ENCODE measurements at regions of chr17 and their contacts with region 1.

Region 1: DNA sequence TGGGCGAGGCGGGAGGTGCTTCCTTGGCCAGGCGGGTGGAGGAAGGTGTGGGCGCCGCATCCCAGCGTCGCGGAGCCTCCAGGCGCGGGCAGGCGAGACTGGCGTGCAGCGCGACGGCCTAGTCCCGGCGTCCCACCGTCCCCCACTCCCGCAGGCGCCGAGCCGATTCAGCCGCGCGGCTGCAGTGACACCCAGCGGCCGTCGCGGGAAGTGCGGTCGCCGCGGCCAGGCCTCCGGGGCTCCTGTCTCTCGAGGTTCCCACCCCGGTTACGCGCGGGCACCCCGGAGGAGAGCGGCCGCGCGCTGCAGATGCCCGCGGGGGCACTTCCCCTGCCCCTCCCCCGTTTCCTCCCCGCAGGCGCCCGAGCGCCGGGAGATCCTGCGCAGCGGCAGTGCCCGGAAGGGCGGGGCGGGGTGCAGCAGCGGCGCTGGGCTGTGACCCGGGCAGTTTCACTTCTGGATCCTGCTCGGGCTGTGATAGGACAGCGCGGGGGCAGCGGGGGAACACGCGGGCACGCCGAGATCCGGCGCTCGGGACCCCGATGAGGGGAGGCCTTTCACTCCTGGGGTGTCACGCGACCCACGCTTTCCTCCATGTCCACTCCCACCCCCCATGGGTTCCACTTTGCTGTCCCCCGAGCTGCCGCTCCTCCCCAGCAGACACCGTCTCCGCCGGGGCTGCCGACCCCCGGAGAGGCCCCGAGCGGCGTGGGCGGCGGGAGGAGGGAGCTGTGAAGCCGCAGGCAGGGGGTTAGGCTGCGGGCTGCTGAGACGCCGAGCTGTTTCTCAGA is 16.6 kb downstream of the GRB7 start:
- DNase-seq: peak; percentile 98
- ATAC-seq: peak; percentile 86
- H3K4me3 Mint-ChIP-seq: peak overlapping the region; percentile 77
- H3K27ac Mint-ChIP-seq: peak overlapping the region; percentile 76
- H3K4me1 Mint-ChIP-seq: peaks cover 61% of the 10 kb centered on the region
- H3K27me3 Mint-ChIP-seq: no peaks in the 10 kb centered on the region

Region 2: GRCh38 chr17:39450847-39451581 is 303.3 kb before region 1 on chr17 and contains the start of gene MED1:
- CTCF ChIA-PET with region 1: no interaction called
- POLR2A ChIA-PET with region 1: no interaction called
- intact Hi-C with region 1: loop called in 1 of 2 experiments (anchors 5 kb)
- DNase-seq: peak; percentile 96
- ATAC-seq: peak; percentile 99
- H3K4me3 Mint-ChIP-seq: peak within 1 kb of the TSS; percentile 96
- H3K27ac Mint-ChIP-seq: peak within 1 kb of the TSS; percentile 96
- H3K4me1 Mint-ChIP-seq: peaks cover 30% of the 10 kb centered on the region
- H3K27me3 Mint-ChIP-seq: no peaks in the 10 kb centered on the region
- total RNA-seq, gene MED1: 66.1 to 76.1 TPM

Region 3: DNA sequence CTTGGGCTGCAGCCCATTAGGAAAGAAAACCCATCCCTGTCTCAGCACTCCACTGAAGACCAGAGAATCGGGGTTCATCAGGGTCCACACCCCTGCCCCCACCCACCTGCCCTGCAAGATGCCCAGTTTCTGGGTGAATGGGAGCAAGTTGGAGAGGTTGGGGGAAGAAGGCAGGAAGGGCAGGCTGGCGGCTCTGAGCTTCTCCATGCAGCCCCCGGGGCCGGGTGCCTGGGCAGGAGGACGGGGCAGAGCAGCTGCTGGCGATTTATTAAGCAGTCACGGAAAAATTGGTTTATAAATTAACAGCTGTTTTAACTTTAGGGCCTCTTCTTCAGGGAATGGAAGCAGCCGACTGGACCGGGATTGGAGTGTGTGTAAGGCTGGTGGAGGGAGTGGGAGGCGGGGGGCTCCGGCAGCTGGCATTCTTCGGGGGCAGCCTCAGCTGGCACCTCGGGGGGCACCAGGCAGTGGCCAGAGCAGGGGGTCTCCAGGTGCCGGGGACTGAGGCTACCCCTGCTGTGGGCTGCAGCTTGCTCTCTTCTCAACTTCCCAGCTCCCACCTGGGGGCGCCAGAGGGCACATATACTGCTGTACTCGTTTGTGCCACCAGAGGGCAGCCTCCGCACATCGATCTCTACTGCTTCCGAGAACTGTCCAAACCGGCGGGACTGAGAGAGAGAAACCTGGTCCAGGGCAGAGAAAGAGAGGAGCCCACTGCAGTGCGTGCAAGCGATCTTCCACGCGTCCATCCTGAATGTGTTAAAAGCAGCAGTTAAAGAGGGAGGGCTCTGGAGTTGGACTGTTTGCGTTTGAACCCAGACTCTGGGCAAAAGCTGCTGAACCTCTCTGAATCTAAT is 132.6 kb before region 1 on chr17:
- CTCF ChIA-PET with region 1: interaction called, 18 read pairs
- POLR2A ChIA-PET with region 1: interaction called, 3 read pairs
- intact Hi-C with region 1: loop called (anchors 1 kb)
- DNase-seq: peak; percentile 91
- ATAC-seq: peak; percentile 68
- H3K4me3 Mint-ChIP-seq: peak overlapping the region; percentile 62
- H3K27ac Mint-ChIP-seq: peak overlapping the region; percentile 91
- H3K4me1 Mint-ChIP-seq: peaks cover 26% of the 10 kb centered on the region
- H3K27me3 Mint-ChIP-seq: peaks cover 18% of the 10 kb centered on the region

Region 4: DNA sequence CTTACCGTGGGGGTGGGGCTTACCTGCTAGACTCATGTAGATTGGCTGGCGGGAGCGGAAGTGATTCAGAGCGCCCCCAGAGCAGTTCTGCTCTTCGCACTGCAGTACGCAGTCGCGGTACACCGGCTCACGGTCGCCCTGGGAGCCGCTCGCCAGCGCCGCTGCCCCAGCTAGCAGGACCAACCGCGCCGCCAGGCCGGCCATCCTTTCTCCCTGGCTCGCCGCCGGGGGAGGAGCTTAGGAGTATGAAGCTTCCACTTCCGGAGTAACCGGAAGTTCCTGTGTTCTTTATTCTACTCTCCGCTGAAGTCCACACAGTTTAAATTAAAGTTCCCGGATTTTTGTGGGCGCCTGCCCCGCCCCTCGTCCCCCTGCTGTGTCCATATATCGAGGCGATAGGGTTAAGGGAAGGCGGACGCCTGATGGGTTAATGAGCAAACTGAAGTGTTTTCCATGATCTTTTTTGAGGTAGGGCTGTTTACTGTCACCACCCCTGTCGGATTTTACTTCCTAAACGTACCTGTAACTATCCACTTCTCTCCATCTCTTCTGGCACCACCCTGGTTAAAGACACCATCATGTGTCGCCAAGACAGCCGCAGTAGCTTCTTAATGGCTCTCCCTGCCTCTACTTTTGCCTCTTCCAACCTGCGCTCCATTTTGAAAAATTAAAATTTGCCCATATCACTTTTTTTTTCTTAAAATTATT is 66.4 kb before region 1 on chr17 and contains the start of gene PGAP3:
- CTCF ChIA-PET with region 1: interaction called, 3 read pairs
- POLR2A ChIA-PET with region 1: no interaction called
- intact Hi-C with region 1: loop called (anchors 1 to 5 kb)
- DNase-seq: peak; percentile 92
- ATAC-seq: peak; percentile 96
- H3K4me3 Mint-ChIP-seq: peak within 1 kb of the TSS; percentile 86
- H3K27ac Mint-ChIP-seq: peak within 1 kb of the TSS; percentile 95
- H3K4me1 Mint-ChIP-seq: peaks cover 19% of the 10 kb centered on the region
- H3K27me3 Mint-ChIP-seq: no peaks in the 10 kb centered on the region
- total RNA-seq, gene PGAP3: 8.6 to 11.9 TPM

Region 5: GRCh38 chr17:39777534-39778365 is 23.4 kb after region 1 on chr17:
- CTCF ChIA-PET with region 1: interaction called, 4 read pairs
- POLR2A ChIA-PET with region 1: interaction called, 19 read pairs
- intact Hi-C with region 1: loop called in 1 of 2 experiments (anchors 1 kb)
- DNase-seq: no peak
- ATAC-seq: peak; percentile 76
- H3K4me3 Mint-ChIP-seq: peak overlapping the region; percentile 72
- H3K27ac Mint-ChIP-seq: peak overlapping the region; percentile 95
- H3K4me1 Mint-ChIP-seq: peaks cover 87% of the 10 kb centered on the region
- H3K27me3 Mint-ChIP-seq: no peaks in the 10 kb centered on the region

Region 6: DNA sequence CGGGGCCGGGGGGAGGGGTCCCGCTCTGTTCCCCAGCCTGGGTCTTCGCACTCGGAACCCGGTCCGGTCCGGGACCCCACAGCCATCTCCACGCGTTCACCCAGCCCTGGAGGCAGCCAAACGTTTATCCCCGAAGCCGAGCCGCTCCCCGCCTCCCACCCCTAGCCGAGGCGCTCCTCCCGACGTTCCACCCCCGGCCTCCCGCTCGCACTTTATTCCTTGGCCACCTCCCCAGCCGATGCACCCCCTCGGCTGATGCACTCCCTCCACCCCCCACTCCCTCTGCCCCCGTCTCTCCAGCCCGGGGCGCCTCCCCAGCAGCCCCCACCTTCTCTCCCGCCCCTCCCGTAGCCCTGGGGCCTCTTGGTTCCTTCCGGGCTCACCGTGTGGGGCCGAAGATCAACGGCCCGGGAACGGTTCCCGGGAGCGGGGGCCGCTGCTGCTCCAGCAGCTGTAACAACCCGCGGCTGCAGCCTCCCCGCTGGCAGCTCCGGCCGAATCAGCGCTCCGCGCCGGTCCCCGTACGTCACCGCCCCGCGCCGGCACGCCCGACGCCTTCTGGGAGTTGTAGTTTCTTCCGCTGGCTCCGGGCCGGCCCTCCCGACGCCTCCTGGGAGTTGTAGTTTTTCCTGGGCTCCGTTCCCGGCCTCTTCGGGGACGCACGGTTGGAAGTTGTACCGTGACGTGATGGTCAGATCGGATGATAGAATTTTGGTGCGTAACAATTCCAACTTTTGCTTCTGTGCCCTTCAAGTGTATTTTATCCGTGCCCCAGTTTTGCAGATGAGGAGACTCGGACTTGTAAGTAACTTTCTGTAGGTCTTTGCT is 173.0 kb after region 1 on chr17 and contains the starts of genes LRRC3C and ORMDL3:
- CTCF ChIA-PET with region 1: interaction called, 3 read pairs
- POLR2A ChIA-PET with region 1: interaction called, 4 read pairs
- intact Hi-C with region 1: loop called in 1 of 2 experiments (anchors 1 kb)
- DNase-seq: peak; percentile 96
- ATAC-seq: peak; percentile 78
- H3K4me3 Mint-ChIP-seq: peak within 1 kb of the TSS; percentile 85
- H3K27ac Mint-ChIP-seq: peak within 1 kb of the TSS; percentile 95
- H3K4me1 Mint-ChIP-seq: peaks cover 56% of the 10 kb centered on the region
- H3K27me3 Mint-ChIP-seq: no peaks in the 10 kb centered on the region
- total RNA-seq, gene LRRC3C: not detected
- total RNA-seq, gene ORMDL3: 46.8 to 64.9 TPM

Measured in activated CD4-positive, alpha-beta T cell treated with anti-CD3 and anti-CD28 coated beads for 36 hours (primary cell).